ENCODE measurements at regions of chr19 and their contacts with region 1.

Region 1: GRCh38 chr19:46346821-46347571 is at the start of gene PPP5C:
- DNase-seq: peak; percentile 67 to 93 (median 81)
- ATAC-seq: peak; percentile 84
- H3K4me3 ChIP-seq: peak within 1 kb of the TSS; percentile 100
- H3K4me3 Mint-ChIP-seq: peak within 1 kb of the TSS; percentile 98
- H3K27ac ChIP-seq: peak within 1 kb of the TSS; percentile 72 to 80
- H3K27ac Mint-ChIP-seq: peak within 1 kb of the TSS; percentile 91
- H3K4me1 ChIP-seq: peaks cover 56% of the 10 kb centered on the region
- H3K4me1 Mint-ChIP-seq: peaks cover 58% of the 10 kb centered on the region
- H3K27me3 ChIP-seq: no peaks in the 10 kb centered on the region
- H3K27me3 Mint-ChIP-seq: no peaks in the 10 kb centered on the region
- CTCF ChIP-seq: peak; percentile 10
- total RNA-seq, gene PPP5C: 18.9 to 20.2 TPM

Region 2: GRCh38 chr19:45927565-45928261 is 419.3 kb before region 1 on chr19:
- CTCF ChIA-PET with region 1: no interaction called
- POLR2A ChIA-PET with region 1: no interaction called
- intact Hi-C with region 1: loop called in 1 of 2 experiments (anchors 10 kb)
- DNase-seq: peak; percentile 78 to 95 (median 84)
- ATAC-seq: peak; percentile 100
- H3K4me3 ChIP-seq: no peak overlapping the region
- H3K4me3 Mint-ChIP-seq: peak overlapping the region; percentile 25
- H3K27ac ChIP-seq: no peak overlapping the region
- H3K27ac Mint-ChIP-seq: no peak overlapping the region
- H3K4me1 ChIP-seq: peaks cover 9% of the 10 kb centered on the region
- H3K4me1 Mint-ChIP-seq: peaks cover 9% of the 10 kb centered on the region
- H3K27me3 ChIP-seq: no peaks in the 10 kb centered on the region
- H3K27me3 Mint-ChIP-seq: peaks cover 22% of the 10 kb centered on the region
- CTCF ChIP-seq: no peak

Region 3: GRCh38 chr19:46392243-46392801 is 45.3 kb after region 1 on chr19:
- CTCF ChIA-PET with region 1: no interaction called
- POLR2A ChIA-PET with region 1: no interaction called
- intact Hi-C with region 1: no loop called
- DNase-seq: no peak
- ATAC-seq: no peak
- H3K4me3 ChIP-seq: no peak overlapping the region
- H3K4me3 Mint-ChIP-seq: no peak overlapping the region
- H3K27ac ChIP-seq: no peak overlapping the region
- H3K27ac Mint-ChIP-seq: no peak overlapping the region
- H3K4me1 ChIP-seq: peaks cover 3% of the 10 kb centered on the region
- H3K4me1 Mint-ChIP-seq: peaks cover 20% of the 10 kb centered on the region
- H3K27me3 ChIP-seq: no peaks in the 10 kb centered on the region
- H3K27me3 Mint-ChIP-seq: no peaks in the 10 kb centered on the region
- CTCF ChIP-seq: no peak

Measured in CD4-positive, alpha-beta T cell (primary cell).